Activated T-helper 2 cell treated with anti-CD3 and anti-CD28 coated beads, Interferon-gamma antibody, Interleukin-2, Interleukin-4, amounts not matched to agents 10 μg/mL and 5 μg/mL and 100 μg/mL, durations not matched to agents 14 hours and 24 hours and 36 hours (primary cell): ENCODE measurements at regions of chr11 and their contacts with region 1.

Region 1: GRCh38 chr11:78339483-78339882 is 78.1 kb downstream of the GAB2 start:
- DNase-seq: no peak
- H3K4me3 Mint-ChIP-seq: peak overlapping the region; percentile 41
- H3K27ac Mint-ChIP-seq: peak overlapping the region; percentile 97
- H3K4me1 Mint-ChIP-seq: peaks cover 92% of the 10 kb centered on the region
- H3K27me3 Mint-ChIP-seq: no peaks in the 10 kb centered on the region

Region 2: DNA sequence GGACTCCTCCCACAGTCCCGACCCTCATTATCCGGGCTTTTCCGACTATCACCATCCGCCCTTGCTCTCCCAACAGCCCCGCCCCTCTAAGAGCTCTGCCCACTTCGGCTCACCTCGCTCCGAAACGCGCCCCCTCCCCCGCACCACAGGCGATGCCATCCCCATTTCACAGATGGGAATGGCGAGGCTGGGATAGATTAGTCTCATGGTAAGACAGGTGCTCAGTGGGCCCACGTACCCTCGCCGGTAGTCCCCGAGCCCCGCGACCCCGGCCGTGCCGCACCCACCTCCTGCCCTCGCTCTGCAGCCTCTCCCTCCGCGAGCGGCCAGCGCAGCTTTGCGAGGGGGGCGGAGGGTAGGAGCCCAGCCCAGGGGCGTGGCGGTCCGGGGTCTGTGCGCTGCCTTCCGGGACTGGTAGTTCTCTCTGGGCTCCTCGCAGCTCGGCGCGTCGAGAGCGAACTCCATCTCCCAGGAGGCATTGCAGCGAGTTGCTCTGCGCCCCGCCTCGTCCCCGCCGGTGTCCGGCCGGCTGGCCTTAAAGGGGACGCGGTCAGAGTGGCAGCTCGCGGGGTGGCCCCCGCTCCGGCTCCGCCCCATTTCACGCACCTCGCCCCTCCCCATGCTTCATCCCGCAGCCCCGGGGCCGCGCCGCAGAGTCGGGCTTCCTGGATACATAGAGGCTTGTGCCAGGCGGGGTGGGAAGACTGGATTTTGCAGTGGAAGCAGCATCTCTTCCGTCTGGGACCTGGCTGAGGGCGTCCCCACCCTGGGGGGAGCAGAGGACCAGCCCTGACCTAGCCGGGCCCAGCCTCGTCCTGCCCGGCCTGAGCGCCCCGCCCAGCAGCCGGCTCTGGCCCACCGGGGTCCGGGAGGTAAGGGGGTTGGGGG is 151.0 kb before region 1 on chr11 and contains the starts of genes KCTD21 and USP35:
- intact Hi-C with region 1: loop called (anchors 5 kb)
- DNase-seq: peak; percentile 93
- H3K4me3 Mint-ChIP-seq: peak within 1 kb of the TSS; percentile 97
- H3K27ac Mint-ChIP-seq: peak within 1 kb of the TSS; percentile 99
- H3K4me1 Mint-ChIP-seq: peaks cover 49% of the 10 kb centered on the region
- H3K27me3 Mint-ChIP-seq: no peaks in the 10 kb centered on the region
- total RNA-seq, gene KCTD21: 10.0 and 10.4 TPM in 2 replicates
- total RNA-seq, gene USP35: 12.9 and 14.6 TPM in 2 replicates

Region 3: DNA sequence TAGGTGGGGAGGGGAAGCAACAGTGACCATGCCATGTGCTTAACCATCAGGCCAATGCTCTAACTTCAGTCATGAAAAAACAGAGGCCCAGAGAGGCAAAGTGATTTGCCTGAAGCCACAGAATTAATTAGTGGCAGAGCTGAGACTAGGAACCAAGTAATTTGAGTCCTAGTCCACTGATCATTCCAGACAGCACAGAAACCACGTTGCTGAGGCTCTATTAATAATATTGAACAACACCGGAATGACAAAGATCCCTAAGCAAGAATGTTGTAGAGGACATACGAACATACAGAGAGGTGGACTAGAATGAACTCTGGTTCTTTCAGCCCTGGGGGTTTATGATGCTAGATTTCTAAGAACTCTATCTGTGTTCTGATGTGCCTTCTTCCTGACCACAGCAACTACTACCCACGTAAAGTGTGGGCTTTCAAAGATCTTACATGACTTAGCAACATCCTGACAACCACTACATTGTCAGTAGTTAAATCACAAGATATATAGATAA is 14.2 kb before region 1 on chr11:
- intact Hi-C with region 1: loop called (anchors 1 kb)
- DNase-seq: peak; percentile 41
- H3K4me3 Mint-ChIP-seq: peak overlapping the region; percentile 10
- H3K27ac Mint-ChIP-seq: peak overlapping the region; percentile 85
- H3K4me1 Mint-ChIP-seq: peaks cover 93% of the 10 kb centered on the region
- H3K27me3 Mint-ChIP-seq: no peaks in the 10 kb centered on the region

Region 4: GRCh38 chr11:78379039-78379670 is 39.7 kb after region 1 on chr11:
- intact Hi-C with region 1: loop called (anchors 5 kb)
- DNase-seq: no peak
- H3K4me3 Mint-ChIP-seq: peak overlapping the region; percentile 56
- H3K27ac Mint-ChIP-seq: peak overlapping the region; percentile 78
- H3K4me1 Mint-ChIP-seq: peaks cover 56% of the 10 kb centered on the region
- H3K27me3 Mint-ChIP-seq: no peaks in the 10 kb centered on the region

Region 5: DNA sequence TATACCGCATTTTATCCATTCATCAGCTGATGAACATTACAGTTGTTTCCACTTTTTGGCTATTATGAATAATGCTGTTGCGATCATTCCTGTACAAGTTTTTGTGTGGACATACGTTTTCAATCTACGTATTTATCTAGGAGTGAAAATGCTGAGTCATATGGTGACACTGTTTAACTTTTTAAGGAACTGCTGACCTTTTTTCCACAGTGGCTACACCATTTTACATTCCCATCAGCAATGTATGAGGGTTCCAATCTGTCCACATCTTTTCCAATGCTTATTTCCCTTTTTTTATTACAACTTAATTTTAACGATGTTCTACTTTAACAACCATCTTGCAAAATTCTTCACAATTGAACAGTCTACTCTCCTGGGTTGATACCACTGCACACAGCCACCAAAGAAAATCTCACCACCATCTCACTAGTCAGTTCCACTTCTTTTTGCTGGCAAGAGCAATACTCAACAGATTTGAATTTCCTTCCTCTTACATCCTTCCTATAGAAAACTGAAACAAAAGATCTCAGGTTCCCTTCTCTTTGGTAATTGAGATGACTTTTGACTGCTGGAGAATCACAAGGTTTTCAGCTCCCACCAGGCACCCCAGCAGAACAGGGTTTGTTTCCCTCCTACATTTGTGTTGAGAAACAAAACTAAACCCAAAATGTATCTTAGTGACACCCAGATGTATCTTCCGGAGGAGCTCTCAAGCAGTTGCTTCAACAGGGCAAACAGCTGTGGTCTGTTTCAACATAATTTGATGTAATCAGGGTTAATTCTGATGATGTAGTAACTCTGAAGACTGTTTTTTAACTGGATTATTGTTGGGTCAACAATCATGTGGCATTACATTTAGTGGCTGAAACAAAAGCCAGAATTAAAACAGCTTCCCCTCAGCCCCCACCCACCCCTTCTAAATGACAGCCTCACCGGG is 85.1 kb after region 1 on chr11:
- intact Hi-C with region 1: loop called (anchors 5 kb)
- DNase-seq: no peak
- H3K4me3 Mint-ChIP-seq: peak overlapping the region; percentile 55
- H3K27ac Mint-ChIP-seq: peak overlapping the region; percentile 73
- H3K4me1 Mint-ChIP-seq: peaks cover 83% of the 10 kb centered on the region
- H3K27me3 Mint-ChIP-seq: no peaks in the 10 kb centered on the region